Sigmoid colon (tissue), 7 donors: ENCODE measurements at regions of chr4 and their contacts with region 1.

Region 1: DNA sequence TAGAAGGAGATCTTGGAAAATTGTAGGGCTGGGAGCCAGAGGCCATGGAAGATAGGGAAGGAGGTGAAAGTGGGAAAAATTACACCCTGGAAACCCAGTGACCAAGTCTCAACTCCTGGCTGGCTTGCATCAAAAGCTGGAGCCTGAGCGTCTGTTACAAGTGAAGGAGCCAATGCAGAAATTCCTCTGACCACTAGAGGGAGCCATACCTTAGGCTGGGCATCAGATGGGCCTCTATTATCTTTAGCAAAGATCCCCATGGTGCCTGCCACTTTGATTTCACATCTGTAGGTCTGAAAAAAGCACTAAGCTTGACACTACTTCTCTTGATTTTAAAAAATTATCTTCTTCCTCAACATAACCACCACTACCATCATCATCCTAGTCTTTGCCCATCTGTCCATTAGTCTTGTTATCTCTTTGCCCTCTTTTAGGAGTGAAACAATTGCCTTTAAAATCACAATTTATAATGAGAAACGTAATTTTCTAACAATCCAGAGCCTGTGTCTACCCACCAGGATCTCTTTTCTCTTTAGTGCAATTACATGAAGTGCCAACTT is 62.9 kb downstream of the ANAPC4 start:
- DNase-seq: no peak
- H3K4me3 ChIP-seq: no peak overlapping the region
- H3K27ac ChIP-seq: no peak overlapping the region
- H3K4me1 ChIP-seq: no peaks in the 10 kb centered on the region
- H3K27me3 ChIP-seq: no peaks in the 10 kb centered on the region
- CTCF ChIP-seq: peak in 3 of 4 experiments; percentile 34 to 80 (median 45)
- EP300 ChIP-seq: no peak
- POLR2A ChIP-seq: no peak

Region 2: DNA sequence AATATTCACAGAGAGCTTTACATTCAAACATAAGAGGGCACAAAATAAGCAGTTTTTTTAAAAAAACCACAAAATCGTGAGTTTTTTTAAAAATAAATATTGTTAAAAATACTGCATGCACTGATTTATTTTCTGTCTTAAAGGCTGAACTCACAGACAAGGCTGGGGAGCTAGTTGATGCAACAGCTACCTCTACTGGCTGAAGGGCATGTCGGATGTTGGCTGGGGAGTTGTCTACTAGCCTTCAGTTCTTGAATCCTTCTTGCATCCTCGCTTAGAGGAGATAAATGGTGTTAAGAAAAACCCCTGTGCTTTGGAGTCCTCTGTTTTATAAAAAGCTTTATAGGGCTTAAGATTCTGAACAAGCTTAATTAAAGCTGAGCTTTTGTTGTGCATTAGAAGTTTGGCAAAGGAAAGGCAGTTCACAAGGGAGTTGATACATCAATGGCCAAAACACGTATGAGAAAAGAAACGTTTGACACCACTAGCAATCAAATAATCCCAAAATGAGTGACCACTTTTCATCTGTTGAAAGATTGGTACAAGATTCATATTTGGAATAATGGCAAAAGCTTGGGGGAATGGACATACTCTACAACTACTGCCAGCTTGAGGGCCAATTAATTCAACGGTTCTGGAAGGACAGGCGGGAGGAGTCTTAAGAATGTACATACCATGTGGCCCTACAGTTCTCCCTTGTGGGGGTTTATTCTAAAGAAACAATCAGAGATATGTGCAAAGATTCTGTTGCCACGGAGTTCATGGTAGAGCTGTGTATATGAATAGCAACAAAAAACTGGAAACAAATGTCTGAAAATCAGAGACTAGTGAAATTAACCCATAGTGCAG is 328.1 kb after region 1 on chr4:
- intact Hi-C with region 1: loop called (anchors 2 kb)
- DNase-seq: no peak
- H3K4me3 ChIP-seq: no peak overlapping the region
- H3K27ac ChIP-seq: no peak overlapping the region
- H3K4me1 ChIP-seq: no peaks in the 10 kb centered on the region
- H3K27me3 ChIP-seq: no peaks in the 10 kb centered on the region
- CTCF ChIP-seq: peak in 3 of 4 experiments; percentile 38 to 61 (median 59)
- EP300 ChIP-seq: no peak
- POLR2A ChIP-seq: no peak